Activated T-helper 1 cell treated with anti-CD3 and anti-CD28 coated beads, Interleukin-12 subunit alpha, Interleukin-12 subunit beta, Interleukin-2, Interleukin-4 antibody, amounts not matched to agents 30 ng/mL and 10 ng/mL and 1 ng/mL, durations not matched to agents 14 hours and 24 hours and 36 hours (primary cell): ENCODE measurements at regions of chr22 and their contacts with region 1.

Region 1: DNA sequence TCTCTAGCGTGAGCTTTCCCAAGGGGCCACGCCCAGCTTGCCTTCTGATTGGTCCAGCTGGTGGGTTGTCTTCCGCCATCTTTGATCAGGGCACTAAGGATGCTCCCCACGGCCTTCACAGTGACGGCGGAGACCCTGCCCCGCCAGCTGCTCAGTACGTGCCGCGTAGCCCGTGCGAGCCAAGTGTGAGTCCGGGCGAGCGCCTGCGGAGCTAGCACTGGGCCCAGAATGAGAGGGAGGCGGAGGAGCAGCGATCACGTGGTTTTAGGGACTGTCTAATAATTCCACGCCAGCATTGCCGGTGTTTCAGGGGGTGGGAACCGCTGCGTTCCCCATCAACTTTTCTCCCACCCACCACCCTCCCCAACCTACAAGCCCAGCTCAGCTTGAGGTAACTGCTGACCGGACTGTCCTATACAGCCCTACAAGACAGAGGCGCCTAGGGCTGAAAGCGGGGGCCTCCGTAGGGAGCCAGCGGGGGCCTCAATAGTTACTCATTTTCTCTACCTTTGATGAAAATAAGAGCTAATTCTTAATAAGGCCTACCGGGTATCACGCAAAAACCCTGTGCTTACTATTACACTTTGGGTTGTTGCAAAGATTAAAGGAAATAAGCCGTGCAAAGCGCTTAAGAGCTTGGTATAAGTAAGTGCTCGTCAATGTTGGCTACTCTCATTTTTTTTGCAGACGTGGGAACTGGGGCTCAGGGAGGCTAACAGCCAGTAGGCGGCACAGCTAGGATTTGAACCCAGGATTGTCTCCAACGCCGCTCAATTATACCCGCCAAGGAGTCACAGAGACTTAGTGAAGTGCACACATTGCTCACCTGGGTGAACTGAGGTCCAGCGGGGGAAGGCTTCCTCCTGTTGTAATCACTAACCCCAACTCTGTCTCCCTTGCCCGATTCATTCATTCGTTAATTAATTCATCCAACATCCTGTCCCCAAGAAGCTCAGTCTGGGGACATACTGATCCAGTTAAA is 1.3 kb upstream of the MTFP1 start:
- DNase-seq: peak; percentile 98
- H3K4me3 Mint-ChIP-seq: peak overlapping the region; percentile 98
- H3K27ac Mint-ChIP-seq: peak overlapping the region; percentile 99
- H3K4me1 Mint-ChIP-seq: peaks cover 66% of the 10 kb centered on the region
- H3K27me3 Mint-ChIP-seq: no peaks in the 10 kb centered on the region

Region 2: DNA sequence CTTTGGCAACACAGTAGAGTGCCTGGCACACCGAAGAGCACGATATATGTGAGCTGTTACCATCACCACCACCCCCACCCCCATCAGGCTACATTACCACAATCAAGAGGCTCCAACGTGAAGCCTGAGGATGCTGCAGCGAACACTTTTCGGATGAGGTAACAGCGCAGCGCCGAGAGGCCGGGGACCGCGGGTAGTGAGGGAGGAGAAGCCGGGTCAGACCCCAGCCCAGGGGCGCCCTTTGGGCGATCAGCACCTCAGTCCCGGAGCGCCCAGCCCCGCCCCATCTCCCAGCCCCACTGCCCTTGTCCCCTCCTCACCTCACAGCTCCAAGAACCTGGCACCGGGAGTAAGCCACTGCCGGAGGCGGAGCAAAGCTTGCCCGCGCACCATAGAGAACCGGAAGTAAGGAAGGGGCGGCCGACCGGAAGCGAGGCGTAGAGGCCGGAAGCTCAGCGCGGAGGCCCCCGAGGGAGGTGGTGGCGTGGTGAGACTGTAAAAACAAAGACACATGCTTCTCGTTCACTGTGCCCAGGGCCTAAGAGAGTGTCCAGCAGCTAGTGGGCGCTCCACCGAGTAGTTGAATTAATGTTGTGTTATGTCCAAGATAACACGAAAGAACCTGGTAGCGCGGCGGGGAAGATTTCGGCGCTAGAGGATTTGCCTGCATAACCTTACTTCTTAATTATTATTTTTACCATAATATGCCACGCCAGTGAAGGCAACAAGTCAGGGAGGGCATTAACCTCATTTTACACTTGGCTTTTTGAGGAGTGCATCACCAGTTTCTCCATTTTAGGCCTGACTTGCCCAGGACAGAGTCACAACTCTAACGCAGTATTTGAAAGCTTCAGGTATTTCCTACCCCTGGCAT is 870.7 kb before region 1 on chr22 and contains the start of gene THOC5:
- intact Hi-C with region 1: loop called (anchors 10 kb)
- DNase-seq: peak; percentile 86
- H3K4me3 Mint-ChIP-seq: peak within 1 kb of the TSS; percentile 93
- H3K27ac Mint-ChIP-seq: peak within 1 kb of the TSS; percentile 94
- H3K4me1 Mint-ChIP-seq: peaks cover 23% of the 10 kb centered on the region
- H3K27me3 Mint-ChIP-seq: no peaks in the 10 kb centered on the region
- total RNA-seq, gene THOC5: 69.0 and 76.2 TPM in 2 replicates

Region 3: GRCh38 chr22:30289134-30289979 is 134.9 kb before region 1 on chr22 and contains the start of gene CASTOR1:
- intact Hi-C with region 1: loop called (anchors 1 kb)
- DNase-seq: peak; percentile 90
- H3K4me3 Mint-ChIP-seq: peak within 1 kb of the TSS; percentile 87
- H3K27ac Mint-ChIP-seq: peak within 1 kb of the TSS; percentile 81
- H3K4me1 Mint-ChIP-seq: peaks cover 56% of the 10 kb centered on the region
- H3K27me3 Mint-ChIP-seq: no peaks in the 10 kb centered on the region
- total RNA-seq, gene CASTOR1: 5.6 and 8.8 TPM in 2 replicates

Region 4: GRCh38 chr22:30356449-30357235 is 67.6 kb before region 1 on chr22 and contains the starts of genes CCDC157 and SF3A1:
- intact Hi-C with region 1: loop called (anchors 1 kb)
- DNase-seq: peak; percentile 88
- H3K4me3 Mint-ChIP-seq: peak within 1 kb of the TSS; percentile 94
- H3K27ac Mint-ChIP-seq: peak within 1 kb of the TSS; percentile 90
- H3K4me1 Mint-ChIP-seq: peaks cover 43% of the 10 kb centered on the region
- H3K27me3 Mint-ChIP-seq: peaks cover 8% of the 10 kb centered on the region
- total RNA-seq, gene CCDC157: 2.4 and 3.0 TPM in 2 replicates
- total RNA-seq, gene SF3A1: 308 and 310 TPM in 2 replicates

Region 5: GRCh38 chr22:30396871-30397655 is 27.2 kb before region 1 on chr22 and contains the start of gene SEC14L2:
- intact Hi-C with region 1: loop called (anchors 1 kb)
- DNase-seq: peak; percentile 58
- H3K4me3 Mint-ChIP-seq: peak within 1 kb of the TSS; percentile 92
- H3K27ac Mint-ChIP-seq: peak within 1 kb of the TSS; percentile 75
- H3K4me1 Mint-ChIP-seq: peaks cover 51% of the 10 kb centered on the region
- H3K27me3 Mint-ChIP-seq: no peaks in the 10 kb centered on the region
- total RNA-seq, gene SEC14L2: 25.6 and 27.0 TPM in 2 replicates

Region 6: GRCh38 chr22:30408414-30409104 is 15.7 kb before region 1 on chr22:
- intact Hi-C with region 1: no loop called
- DNase-seq: no peak
- H3K4me3 Mint-ChIP-seq: no peak overlapping the region
- H3K27ac Mint-ChIP-seq: peak overlapping the region; percentile 7
- H3K4me1 Mint-ChIP-seq: peaks cover 27% of the 10 kb centered on the region
- H3K27me3 Mint-ChIP-seq: no peaks in the 10 kb centered on the region

Region 7: GRCh38 chr22:30435674-30436126 is 11.4 kb after region 1 on chr22:
- intact Hi-C with region 1: loop called (anchors 1 kb)
- DNase-seq: peak; percentile 56
- H3K4me3 Mint-ChIP-seq: peak overlapping the region; percentile 62
- H3K27ac Mint-ChIP-seq: peak overlapping the region; percentile 75
- H3K4me1 Mint-ChIP-seq: peaks cover 21% of the 10 kb centered on the region
- H3K27me3 Mint-ChIP-seq: peaks cover 13% of the 10 kb centered on the region

Region 8: DNA sequence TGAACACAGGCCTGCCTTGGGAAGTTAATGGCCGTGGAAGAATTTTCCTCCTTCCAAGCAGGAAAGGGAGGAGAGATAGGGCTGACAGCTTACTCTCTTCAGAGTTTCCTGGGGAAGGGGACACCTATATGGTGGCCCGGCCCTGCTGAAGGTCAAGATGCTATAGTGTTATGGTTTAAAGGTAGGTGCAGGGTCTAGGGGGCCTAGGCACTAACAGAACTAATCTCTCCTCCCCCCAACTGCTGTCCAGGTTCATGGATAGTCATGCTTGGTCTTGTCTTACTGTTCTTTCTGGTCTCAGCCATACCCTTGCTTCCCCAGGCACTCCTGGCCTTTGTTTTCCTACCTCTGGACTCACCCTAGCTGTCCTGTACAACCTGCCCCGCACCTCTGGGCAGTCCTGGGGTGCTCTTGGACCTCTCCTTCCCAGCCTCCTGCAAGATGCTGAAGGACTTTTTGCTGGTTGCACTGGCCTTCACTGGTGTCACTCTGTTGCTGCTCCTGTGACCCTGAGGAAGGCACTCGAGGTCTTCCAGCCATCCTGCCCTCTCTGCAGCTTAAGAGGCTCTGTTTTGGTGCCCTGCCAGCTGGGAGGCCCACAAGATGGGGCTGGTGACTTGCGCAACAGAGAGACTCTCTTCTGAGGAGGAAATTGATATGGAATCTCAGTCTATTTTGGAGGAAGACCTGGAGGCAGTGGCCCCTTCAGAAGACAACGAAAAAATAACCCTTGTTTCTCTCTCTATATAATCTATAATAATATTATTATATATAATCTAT is 29.6 kb after region 1 on chr22:
- intact Hi-C with region 1: no loop called
- DNase-seq: no peak
- H3K4me3 Mint-ChIP-seq: no peak overlapping the region
- H3K27ac Mint-ChIP-seq: no peak overlapping the region
- H3K4me1 Mint-ChIP-seq: peaks cover 7% of the 10 kb centered on the region
- H3K27me3 Mint-ChIP-seq: peaks cover 18% of the 10 kb centered on the region

Region 9: GRCh38 chr22:30485362-30485988 is 61.2 kb after region 1 on chr22:
- intact Hi-C with region 1: loop called (anchors 1 kb)
- DNase-seq: peak; percentile 70
- H3K4me3 Mint-ChIP-seq: no peak overlapping the region
- H3K27ac Mint-ChIP-seq: no peak overlapping the region
- H3K4me1 Mint-ChIP-seq: no peaks in the 10 kb centered on the region
- H3K27me3 Mint-ChIP-seq: peaks cover 4% of the 10 kb centered on the region